ENCODE measurements at regions of chr1 and their contacts with region 1.

Region 1: DNA sequence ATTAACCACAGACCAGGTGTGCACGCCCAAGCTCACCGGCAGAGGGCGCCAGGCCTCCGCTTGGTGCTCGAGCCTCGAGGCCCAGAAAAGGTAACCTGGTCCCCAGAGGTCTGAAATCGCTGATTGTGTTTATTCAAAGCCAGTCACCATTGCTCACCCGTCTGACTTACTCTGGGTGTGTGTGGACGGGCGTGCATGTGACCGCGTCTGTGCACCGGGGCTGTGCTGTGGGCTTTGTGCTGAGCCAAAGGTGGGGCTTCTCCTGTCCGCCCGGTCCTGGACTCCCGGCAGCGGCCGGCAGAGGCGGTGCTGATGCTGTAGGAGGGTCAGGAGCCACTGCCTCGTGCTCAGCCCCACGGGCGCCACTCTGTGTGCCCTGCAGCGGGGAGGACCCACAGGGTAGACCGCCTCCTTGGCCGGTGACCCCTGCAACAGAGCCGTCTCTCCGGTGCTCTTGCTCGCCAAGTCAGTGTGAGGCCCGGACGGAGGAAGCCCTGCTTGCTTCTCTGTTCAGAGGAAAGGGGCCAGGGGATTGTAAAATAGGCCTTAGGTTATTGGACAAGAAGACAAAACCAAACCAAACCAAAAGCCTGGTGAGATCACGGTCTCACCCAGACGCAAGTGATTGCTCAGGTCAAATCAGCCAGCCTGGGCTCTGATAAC is 32.0 kb upstream of the BTG2 start:
- DNase-seq: peak; percentile 76
- H3K4me3 ChIP-seq: no peak overlapping the region
- H3K27ac ChIP-seq: no peak overlapping the region
- H3K4me1 ChIP-seq: peaks cover 5% of the 10 kb centered on the region
- H3K27me3 ChIP-seq: peaks cover 4 to 6% of the 10 kb centered on the region in 2 experiments
- CTCF ChIP-seq: peak; percentile 96 to 97
- POLR2A ChIP-seq: no peak

Region 2: DNA sequence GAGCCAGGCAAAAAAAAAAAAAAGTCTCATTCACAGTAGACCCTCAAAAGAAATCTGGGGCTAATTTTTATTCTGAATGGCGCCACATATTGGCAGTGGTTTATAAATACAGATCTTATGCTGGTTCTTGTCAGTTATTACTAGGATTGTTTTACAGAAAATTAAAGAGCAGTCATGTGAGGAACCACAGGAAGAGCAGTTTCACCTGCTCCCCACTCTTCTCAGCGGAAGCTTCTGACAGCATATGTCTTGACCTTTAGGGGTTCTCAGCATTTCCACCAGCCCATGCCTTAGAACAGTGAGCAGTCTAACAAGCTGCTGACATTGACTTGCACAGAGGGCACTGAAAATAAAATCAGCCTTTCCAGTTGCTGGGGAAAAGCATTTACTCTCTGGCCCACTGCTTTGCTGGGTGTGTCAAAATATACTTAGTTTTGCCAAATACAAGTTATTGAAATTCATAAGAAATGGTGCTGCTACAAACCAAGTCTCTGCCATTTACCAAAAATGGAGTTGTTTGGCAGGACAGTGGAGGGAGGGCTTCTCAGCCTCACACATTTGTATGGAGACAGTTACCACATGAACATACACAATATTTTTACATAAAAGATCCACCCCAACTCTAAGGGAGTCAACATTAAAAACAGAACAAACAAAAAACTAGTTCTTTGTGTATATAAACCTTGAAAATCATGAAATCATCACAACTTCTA is 707.3 kb before region 1 on chr1:
- CTCF ChIA-PET with region 1: no interaction called
- POLR2A ChIA-PET with region 1: no interaction called
- dilution Hi-C with region 1: no loop called
- intact Hi-C with region 1: no loop called
- DNase-seq: no peak
- H3K4me3 ChIP-seq: no peak overlapping the region
- H3K27ac ChIP-seq: no peak overlapping the region
- H3K4me1 ChIP-seq: no peaks in the 10 kb centered on the region
- H3K27me3 ChIP-seq: no peaks in the 10 kb centered on the region
- CTCF ChIP-seq: no peak
- POLR2A ChIP-seq: no peak

Region 3: DNA sequence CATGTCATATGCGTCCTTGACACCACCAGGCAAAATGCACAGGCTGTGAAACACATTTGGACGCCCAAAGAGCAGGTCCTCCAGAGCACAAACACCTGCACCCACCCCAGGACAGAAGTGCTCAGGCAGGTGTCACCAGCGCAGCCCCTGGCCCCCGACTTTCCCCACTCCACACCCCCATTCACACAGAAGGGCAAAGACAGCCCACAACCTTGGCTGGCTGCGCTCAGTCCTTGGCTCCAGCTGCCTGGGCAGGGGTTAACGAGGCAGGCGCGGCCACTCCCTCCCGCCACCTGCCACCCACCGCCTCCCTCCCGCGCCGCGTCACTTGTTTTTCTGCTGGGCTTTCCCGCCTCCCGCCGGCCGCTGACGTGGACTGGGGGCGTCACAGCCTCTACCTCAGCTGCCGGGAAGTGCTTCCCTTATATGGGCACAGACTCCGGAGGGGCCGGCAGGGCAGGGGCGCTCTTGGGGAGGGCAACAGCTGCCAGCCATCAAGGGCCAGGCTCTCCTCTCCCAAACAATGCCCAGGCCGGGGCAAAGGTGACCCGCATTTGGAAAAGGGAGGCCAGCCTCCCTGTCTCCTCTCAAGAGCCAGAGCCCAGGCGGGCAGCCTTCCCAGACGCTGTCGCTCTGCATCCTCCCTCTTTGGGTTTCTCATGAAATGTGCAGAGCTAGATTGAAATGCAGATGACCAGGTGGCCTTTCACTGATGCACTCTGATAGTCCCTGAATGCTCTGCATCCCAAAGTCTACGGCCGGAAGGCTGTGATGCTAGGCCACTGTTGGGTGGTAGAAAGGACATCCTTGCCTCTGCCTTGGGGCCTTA is 17.1 kb after region 1 on chr1:
- CTCF ChIA-PET with region 1: interaction called, 91 read pairs
- POLR2A ChIA-PET with region 1: no interaction called
- dilution Hi-C with region 1: no loop called
- intact Hi-C with region 1: loop called (anchors 1 kb)
- DNase-seq: peak; percentile 84
- H3K4me3 ChIP-seq: no peak overlapping the region
- H3K27ac ChIP-seq: no peak overlapping the region
- H3K4me1 ChIP-seq: peaks cover 15% of the 10 kb centered on the region
- H3K27me3 ChIP-seq: no peaks in the 10 kb centered on the region
- CTCF ChIP-seq: no peak
- POLR2A ChIP-seq: no peak

Region 4: GRCh38 chr1:203304919-203305808 is 31.8 kb after region 1 on chr1 and contains the start of gene BTG2:
- CTCF ChIA-PET with region 1: interaction called, 88 read pairs
- POLR2A ChIA-PET with region 1: interaction called, 5 read pairs
- dilution Hi-C with region 1: no loop called
- intact Hi-C with region 1: loop called (anchors 1 kb)
- DNase-seq: peak; percentile 91
- H3K4me3 ChIP-seq: peak within 1 kb of the TSS; percentile 70 to 97 (median 73)
- H3K27ac ChIP-seq: peak within 1 kb of the TSS; percentile 42
- H3K4me1 ChIP-seq: peaks cover 19% of the 10 kb centered on the region
- H3K27me3 ChIP-seq: peaks cover 4 to 7% of the 10 kb centered on the region in 2 experiments
- CTCF ChIP-seq: no peak
- POLR2A ChIP-seq: peak; percentile 99
- total RNA-seq, gene BTG2: 40.3 and 50.1 TPM in 2 replicates

Region 5: DNA sequence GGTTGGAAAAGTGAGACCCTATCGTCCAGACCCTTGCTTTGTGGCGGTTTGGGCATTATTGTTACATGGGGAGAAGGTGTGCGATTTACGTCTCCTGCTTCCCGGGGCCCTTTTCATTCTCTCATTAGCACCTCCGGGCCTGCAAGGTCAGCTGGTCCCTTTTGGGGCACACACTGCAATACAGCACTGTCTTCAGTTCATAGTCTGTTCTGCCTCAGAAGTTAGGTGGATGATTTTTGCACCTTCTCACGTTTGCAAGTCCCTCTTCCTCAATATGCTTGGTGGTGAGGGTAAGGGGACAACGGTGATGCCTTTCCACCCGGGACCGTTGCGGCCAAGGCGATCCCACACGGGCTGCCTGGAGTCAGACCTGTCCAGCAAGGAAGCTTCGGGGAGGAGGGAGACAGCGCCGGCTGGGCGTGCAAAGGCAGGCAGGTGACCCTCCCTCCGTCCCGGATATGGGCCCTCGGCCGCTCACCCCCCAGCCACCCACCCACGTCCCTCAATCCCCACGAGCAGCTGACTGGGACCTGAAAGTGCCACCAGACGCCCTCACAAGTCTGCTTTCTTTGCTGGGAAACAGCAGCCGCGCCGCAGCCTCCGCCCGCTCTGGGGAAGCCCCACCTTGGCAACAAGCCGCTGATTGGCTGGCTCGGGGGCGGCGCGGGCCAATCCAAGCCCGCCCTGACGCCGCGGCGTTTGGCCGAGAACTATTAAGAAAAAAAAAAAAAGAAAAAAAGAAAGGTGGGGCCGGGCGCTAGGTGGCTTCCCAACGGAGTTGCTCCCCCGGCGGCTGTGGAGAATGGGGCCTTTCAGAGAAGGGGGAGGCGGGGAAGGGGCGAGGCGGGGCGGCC is 53.7 kb after region 1 on chr1:
- CTCF ChIA-PET with region 1: interaction called, 1,014 read pairs
- POLR2A ChIA-PET with region 1: interaction called, 12 read pairs
- dilution Hi-C with region 1: no loop called
- intact Hi-C with region 1: loop called (anchors 1 kb)
- DNase-seq: peak; percentile 94
- H3K4me3 ChIP-seq: peak overlapping the region; percentile 19 to 52 (median 39)
- H3K27ac ChIP-seq: no peak overlapping the region
- H3K4me1 ChIP-seq: peaks cover 19% of the 10 kb centered on the region
- H3K27me3 ChIP-seq: peaks cover 8 to 23% of the 10 kb centered on the region in 2 experiments
- CTCF ChIP-seq: no peak
- POLR2A ChIP-seq: peak; percentile 8

Region 6: DNA sequence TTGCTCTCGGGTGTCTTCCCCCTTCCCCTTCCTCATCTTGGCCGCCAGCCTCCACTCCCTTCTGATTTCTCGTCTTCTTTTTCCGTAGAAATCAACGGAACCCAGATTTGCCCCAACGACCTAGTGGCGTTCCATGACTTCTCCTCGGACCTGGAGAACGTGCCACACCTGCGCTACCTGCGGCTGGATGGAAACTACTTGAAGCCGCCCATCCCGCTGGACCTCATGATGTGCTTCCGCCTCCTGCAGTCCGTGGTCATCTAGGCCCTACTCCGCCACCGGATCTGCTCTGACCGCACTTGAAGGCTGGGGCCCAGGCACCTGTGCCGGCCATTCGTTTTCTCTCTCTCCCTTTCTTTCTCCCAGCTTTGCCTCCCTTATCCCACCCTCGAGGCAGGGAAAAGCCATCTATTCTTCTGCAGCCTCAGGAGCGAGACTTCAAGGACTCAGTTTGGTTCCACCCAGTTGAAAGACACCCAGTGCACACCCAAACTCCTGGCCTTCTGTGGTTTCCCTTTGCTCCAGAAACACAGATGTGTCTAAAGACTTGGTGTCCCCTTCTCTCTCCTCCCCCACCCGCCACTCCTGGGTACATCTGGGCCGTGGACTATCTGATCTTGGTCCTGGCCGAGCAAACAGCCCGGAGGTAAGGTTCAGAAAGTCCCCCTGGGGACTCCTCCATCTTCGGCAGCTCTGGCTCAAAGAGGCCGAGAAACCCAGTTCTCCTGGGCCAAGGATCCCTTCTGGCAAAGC is 213.5 kb after region 1 on chr1:
- CTCF ChIA-PET with region 1: interaction called, 51 read pairs
- POLR2A ChIA-PET with region 1: no interaction called
- dilution Hi-C with region 1: no loop called
- intact Hi-C with region 1: loop called (anchors 1 kb)
- DNase-seq: no peak
- H3K4me3 ChIP-seq: peak overlapping the region in 2 of 3 experiments; percentile 37 to 38
- H3K27ac ChIP-seq: peak overlapping the region; percentile 52
- H3K4me1 ChIP-seq: no peaks in the 10 kb centered on the region
- H3K27me3 ChIP-seq: peaks cover 5 to 8% of the 10 kb centered on the region in 2 experiments
- CTCF ChIP-seq: no peak
- POLR2A ChIP-seq: no peak